GM10248 (cell line): ENCODE measurements at regions of chr15 and their contacts with region 1.

Region 1: GRCh38 chr15:72155635-72156616 is 37.7 kb downstream of the SENP8 start:
- DNase-seq: peak; percentile 79
- CTCF ChIP-seq: peak; percentile 93

Region 2: GRCh38 chr15:71743861-71744382 is 412.0 kb before region 1 on chr15:
- CTCF ChIA-PET with region 1: interaction called, 48 read pairs
- POLR2A ChIA-PET with region 1: no interaction called
- DNase-seq: peak; percentile 65
- CTCF ChIP-seq: peak; percentile 65

Region 3: GRCh38 chr15:71780115-71780976 is 375.6 kb before region 1 on chr15:
- CTCF ChIA-PET with region 1: interaction called, 16 read pairs
- POLR2A ChIA-PET with region 1: no interaction called
- DNase-seq: peak; percentile 74
- CTCF ChIP-seq: peak; percentile 67

Region 4: DNA sequence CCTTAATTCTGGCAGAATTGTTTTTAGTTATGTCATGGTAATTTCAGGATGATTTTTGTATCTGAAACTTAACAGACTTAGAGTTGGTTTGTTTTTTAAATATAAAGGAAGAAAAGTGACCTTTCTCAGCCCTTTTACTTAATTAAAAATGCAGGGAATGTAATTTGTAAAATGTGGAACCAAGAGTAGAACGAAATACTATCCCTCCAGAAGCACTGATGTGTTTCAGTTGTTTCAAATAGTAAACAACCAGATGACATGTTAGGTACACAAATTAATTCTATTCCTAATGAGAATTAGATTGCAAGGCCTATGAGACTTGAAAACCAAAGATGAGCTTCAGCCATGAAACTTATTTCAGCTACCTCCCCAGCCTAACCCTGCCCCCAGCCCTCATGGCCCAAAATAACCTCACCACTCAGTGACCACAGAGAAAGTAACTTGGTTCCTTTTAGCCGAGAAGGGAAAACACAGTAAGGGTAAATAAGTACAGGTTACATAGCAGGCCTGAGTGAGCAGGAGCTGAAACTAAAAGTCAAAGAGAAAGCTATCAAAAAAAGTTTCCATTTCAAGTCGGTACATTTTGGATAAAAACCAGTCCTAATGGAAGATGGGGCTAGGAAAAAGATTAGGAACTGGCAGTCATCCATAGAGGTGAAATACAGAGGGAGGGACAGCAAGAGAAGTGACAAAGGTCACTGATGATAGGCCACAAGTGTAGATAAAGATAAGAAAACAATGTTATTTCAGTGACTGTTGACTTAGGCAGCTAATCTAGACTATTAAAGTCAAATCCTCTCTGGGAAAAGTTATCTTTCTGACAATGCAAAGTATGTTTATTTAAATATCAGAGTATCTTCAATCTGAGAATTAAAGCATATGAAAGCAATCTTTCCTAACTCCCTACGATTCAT is 14.5 kb before region 1 on chr15:
- CTCF ChIA-PET with region 1: interaction called, 27 read pairs
- POLR2A ChIA-PET with region 1: no interaction called
- DNase-seq: peak; percentile 85
- CTCF ChIP-seq: no peak

Region 5: DNA sequence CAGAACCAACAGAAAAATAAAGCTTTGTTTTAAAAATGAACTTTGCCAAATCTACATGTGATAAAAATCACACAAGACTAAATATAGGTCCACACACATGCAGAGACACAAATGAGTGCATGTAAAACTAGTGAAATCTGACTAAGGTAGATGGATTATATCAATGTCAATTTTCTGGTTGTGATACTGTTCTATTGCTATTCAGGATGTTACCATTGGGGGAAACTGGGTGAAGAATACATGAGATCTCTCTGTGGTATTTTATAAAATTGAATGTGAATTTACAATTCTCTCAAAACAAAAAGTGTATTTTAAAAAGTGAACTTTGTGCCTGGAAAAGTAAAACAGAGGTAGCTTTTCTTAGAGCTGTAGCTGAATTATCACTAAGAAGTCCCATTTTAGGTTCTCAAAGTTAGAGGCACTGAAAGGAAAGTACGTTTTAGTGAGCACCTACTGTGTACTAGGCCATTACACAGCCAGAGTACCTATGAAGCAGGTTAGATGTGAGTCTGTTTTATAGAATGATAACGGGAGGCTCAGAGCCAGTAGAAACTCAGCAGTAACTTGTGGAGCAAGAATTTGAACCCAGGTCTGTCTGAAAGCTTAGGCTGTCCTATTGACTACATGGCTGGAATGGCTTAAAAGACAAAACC is 33.5 kb after region 1 on chr15:
- CTCF ChIA-PET with region 1: interaction called, 11 read pairs
- POLR2A ChIA-PET with region 1: no interaction called
- DNase-seq: no peak
- CTCF ChIP-seq: no peak

Region 6: GRCh38 chr15:72220678-72221077 is 64.8 kb after region 1 on chr15:
- CTCF ChIA-PET with region 1: no interaction called
- POLR2A ChIA-PET with region 1: no interaction called
- DNase-seq: no peak
- CTCF ChIP-seq: no peak